Transverse colon (tissue), 4 donors: ENCODE measurements at regions of chr12 and their contacts with region 1.

Region 1: DNA sequence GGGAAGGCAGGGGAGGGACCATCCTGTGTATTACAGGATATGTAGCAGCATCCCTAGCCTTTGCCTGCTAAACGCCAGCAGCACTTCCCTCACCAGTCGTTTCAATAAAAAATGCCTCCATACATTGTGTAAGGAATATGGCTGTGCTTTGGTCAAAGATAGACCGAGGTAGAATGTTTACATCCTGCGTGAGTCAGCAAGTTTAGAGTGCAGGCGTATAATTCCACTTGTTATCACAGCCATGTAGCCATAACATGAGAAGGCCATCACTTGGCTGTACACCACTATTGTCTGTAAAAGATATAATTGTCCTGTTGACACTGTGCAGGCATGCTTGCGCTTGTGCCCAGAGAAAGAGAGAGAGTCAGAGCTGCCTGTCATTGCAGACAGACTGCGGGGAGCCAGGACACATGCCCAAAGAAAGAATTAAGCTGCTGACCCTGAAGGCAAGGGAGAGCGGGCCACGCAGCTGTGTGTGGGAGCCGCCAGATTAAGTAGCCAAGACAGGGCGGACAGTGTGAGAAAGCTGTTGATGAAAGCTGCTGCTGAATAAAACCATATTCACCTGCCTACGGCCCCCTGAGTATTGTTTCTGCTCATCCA is 68.4 kb downstream of the CRACR2A start:
- DNase-seq: no peak
- H3K4me3 ChIP-seq: no peak overlapping the region
- H3K27ac ChIP-seq: no peak overlapping the region
- H3K4me1 ChIP-seq: peaks cover 0 to 13% (median 10%) of the 10 kb centered on the region in 4 donors
- H3K27me3 ChIP-seq: no peaks in the 10 kb centered on the region
- CTCF ChIP-seq: no peak
- EP300 ChIP-seq: no peak
- POLR2A ChIP-seq: no peak

Region 2: GRCh38 chr12:3538466-3539030 is 146.0 kb before region 1 on chr12:
- in situ Hi-C with region 1: no loop called
- intact Hi-C with region 1: no loop called
- DNase-seq: no peak
- H3K4me3 ChIP-seq: no peak overlapping the region
- H3K27ac ChIP-seq: no peak overlapping the region
- H3K4me1 ChIP-seq: peaks cover 0 to 8% (median 3%) of the 10 kb centered on the region in 4 donors
- H3K27me3 ChIP-seq: no peaks in the 10 kb centered on the region
- CTCF ChIP-seq: no peak
- EP300 ChIP-seq: no peak
- POLR2A ChIP-seq: no peak

Region 3: GRCh38 chr12:3571724-3572123 is 112.8 kb before region 1 on chr12:
- in situ Hi-C with region 1: no loop called
- intact Hi-C with region 1: loop called (anchors 5 kb)
- DNase-seq: no peak
- H3K4me3 ChIP-seq: no peak overlapping the region
- H3K27ac ChIP-seq: no peak overlapping the region
- H3K4me1 ChIP-seq: no peaks in the 10 kb centered on the region
- H3K27me3 ChIP-seq: no peaks in the 10 kb centered on the region
- CTCF ChIP-seq: no peak
- EP300 ChIP-seq: no peak
- POLR2A ChIP-seq: no peak